Vagina (tissue), 2 donors: ENCODE measurements at regions of chr9 and their contacts with region 1.

Region 1: GRCh38 chr9:35091536-35091935 is 4.9 kb downstream of the PIGO start:
- DNase-seq: no peak
- H3K4me3 ChIP-seq: no peak overlapping the region
- H3K27ac ChIP-seq: no peak overlapping the region
- H3K4me1 ChIP-seq: peaks cover 12% of the 10 kb centered on the region
- H3K27me3 ChIP-seq: no peaks in the 10 kb centered on the region
- CTCF ChIP-seq: no peak
- POLR2A ChIP-seq: no peak

Region 2: DNA sequence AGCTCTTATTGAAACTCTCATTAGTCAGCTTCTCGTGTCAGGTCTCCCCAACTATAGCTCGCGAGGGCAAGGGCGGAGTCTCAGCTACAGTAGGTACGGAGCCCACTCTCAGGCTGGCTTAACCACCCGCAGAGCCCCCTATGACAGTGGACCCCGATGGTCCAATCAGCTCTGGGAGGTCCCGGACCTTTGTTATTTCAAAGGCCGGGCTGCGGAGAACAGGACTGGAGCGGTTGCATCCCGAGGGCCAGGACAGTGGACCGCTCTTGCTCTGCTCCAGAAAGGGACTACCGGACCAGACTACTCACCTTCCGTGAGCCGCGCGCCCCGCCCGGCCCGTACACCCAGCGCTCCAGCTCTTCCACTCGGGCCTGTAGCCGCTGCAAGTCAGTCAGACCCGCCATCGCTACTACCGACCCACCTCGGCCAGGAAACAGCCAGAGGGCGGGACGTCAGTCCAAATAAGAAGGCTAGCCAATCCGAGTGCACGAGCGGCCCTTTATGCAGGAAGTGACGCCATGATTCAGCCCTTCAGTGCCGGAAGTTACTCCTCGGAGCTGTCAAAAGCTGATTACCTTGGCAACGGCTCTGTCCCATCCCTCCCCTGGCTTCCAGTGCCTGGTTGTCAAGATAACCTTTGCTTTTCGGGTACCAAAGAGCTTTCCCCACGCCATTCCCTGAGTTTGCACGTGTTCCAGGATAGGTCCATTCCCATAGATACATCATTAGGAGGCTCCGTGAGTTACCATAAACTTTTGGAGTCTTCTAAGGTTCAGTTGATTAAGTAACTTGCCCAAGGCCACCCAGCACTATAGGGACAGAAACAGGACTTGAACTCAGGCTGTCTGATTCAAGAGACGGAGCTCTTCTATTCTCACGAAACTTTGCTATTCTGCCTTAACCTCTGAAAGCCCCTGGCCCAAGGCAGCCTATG is 471.2 kb before region 1 on chr9 and contains the start of gene DCTN3:
- intact Hi-C with region 1: no loop called
- DNase-seq: peak in 1 of 2 donors; percentile 95
- H3K4me3 ChIP-seq: peak within 1 kb of the TSS; percentile 68 to 81
- H3K27ac ChIP-seq: peak within 1 kb of the TSS; percentile 54
- H3K4me1 ChIP-seq: peaks cover 28% of the 10 kb centered on the region
- H3K27me3 ChIP-seq: peaks cover 12% of the 10 kb centered on the region
- CTCF ChIP-seq: peak in 1 of 3 experiments; percentile 23
- POLR2A ChIP-seq: no peak
- total RNA-seq, gene DCTN3: 78.6 TPM

Region 3: DNA sequence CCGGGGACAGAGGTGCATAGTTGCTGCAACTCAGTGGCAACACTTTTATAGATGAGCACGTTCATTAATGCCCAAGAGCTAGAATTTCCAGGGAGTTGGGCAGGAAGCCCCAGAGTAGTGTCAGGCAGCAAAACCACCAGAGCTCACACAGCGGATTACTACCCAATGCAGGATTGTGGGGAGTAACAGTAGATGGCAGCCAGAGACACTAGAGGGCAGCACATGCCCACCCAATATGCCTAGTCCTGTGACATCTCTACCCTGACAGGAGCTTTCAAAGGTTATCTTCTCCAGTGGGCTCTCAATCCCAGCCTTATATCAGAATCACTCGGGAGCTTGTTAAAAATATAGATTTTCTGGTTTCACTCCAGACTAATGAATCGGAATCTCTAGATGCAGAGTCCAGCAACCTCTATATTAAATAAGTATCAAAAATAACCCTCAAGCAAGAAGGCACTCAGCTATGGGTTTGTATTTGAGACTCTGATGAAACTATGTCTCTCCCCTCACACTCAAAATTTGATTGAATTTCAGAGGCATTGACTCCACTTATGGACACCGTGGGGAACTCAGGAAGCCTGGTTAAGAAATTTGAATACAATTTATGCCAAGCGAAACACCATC is 191.9 kb before region 1 on chr9:
- intact Hi-C with region 1: loop called (anchors 5 kb)
- DNase-seq: no peak
- H3K4me3 ChIP-seq: no peak overlapping the region
- H3K27ac ChIP-seq: no peak overlapping the region
- H3K4me1 ChIP-seq: no peaks in the 10 kb centered on the region
- H3K27me3 ChIP-seq: no peaks in the 10 kb centered on the region
- CTCF ChIP-seq: peak; percentile 60 to 84 (median 83)
- POLR2A ChIP-seq: no peak

Region 4: GRCh38 chr9:35350827-35351549 is 259.5 kb after region 1 on chr9:
- intact Hi-C with region 1: no loop called
- DNase-seq: no peak
- H3K4me3 ChIP-seq: no peak overlapping the region
- H3K27ac ChIP-seq: no peak overlapping the region
- H3K4me1 ChIP-seq: peaks cover 15% of the 10 kb centered on the region
- H3K27me3 ChIP-seq: no peaks in the 10 kb centered on the region
- CTCF ChIP-seq: no peak
- POLR2A ChIP-seq: no peak